ENCODE measurements at regions of chr12 and their contacts with region 1.

Region 1: GRCh38 chr12:95998611-95999286 is 2.6 kb upstream of the HAL start:
- DNase-seq: peak; percentile 55 to 71 (median 61)
- H3K4me3 ChIP-seq: no peak overlapping the region
- H3K4me3 Mint-ChIP-seq: no peak overlapping the region
- H3K27ac ChIP-seq: peak overlapping the region; percentile 10 to 90
- H3K27ac Mint-ChIP-seq: peak overlapping the region; percentile 60 to 94 (median 86)
- H3K4me1 ChIP-seq: peaks cover 49 to 57% of the 10 kb centered on the region in 2 donors
- H3K4me1 Mint-ChIP-seq: peaks cover 60% of the 10 kb centered on the region
- H3K27me3 ChIP-seq: no peaks in the 10 kb centered on the region
- H3K27me3 Mint-ChIP-seq: peaks cover 0 to 2% (median 0%) of the 10 kb centered on the region in 3 donors
- CTCF ChIP-seq: peak; percentile 85

Region 2: GRCh38 chr12:95858479-95859343 is 140.0 kb before region 1 on chr12 and contains the start of gene SNRPF:
- intact Hi-C with region 1: loop called in 1 of 2 experiments (anchors 5 kb)
- DNase-seq: peak; percentile 94 to 96 (median 96)
- H3K4me3 ChIP-seq: peak within 1 kb of the TSS; percentile 68 to 88 (median 73)
- H3K4me3 Mint-ChIP-seq: no peak within 1 kb of the TSS
- H3K27ac ChIP-seq: peak within 1 kb of the TSS; percentile 81 to 88
- H3K27ac Mint-ChIP-seq: peak within 1 kb of the TSS in 1 of 7 donors; percentile 11
- H3K4me1 ChIP-seq: peaks cover 23 to 28% of the 10 kb centered on the region in 2 donors
- H3K4me1 Mint-ChIP-seq: no peaks in the 10 kb centered on the region
- H3K27me3 ChIP-seq: peaks cover 23 to 38% of the 10 kb centered on the region in 2 donors
- H3K27me3 Mint-ChIP-seq: peaks cover 19 to 25% (median 23%) of the 10 kb centered on the region in 3 donors
- CTCF ChIP-seq: no peak
- polyA plus RNA-seq, gene SNRPF: 9.0 to 28.5 (median 23.5) TPM

Region 3: DNA sequence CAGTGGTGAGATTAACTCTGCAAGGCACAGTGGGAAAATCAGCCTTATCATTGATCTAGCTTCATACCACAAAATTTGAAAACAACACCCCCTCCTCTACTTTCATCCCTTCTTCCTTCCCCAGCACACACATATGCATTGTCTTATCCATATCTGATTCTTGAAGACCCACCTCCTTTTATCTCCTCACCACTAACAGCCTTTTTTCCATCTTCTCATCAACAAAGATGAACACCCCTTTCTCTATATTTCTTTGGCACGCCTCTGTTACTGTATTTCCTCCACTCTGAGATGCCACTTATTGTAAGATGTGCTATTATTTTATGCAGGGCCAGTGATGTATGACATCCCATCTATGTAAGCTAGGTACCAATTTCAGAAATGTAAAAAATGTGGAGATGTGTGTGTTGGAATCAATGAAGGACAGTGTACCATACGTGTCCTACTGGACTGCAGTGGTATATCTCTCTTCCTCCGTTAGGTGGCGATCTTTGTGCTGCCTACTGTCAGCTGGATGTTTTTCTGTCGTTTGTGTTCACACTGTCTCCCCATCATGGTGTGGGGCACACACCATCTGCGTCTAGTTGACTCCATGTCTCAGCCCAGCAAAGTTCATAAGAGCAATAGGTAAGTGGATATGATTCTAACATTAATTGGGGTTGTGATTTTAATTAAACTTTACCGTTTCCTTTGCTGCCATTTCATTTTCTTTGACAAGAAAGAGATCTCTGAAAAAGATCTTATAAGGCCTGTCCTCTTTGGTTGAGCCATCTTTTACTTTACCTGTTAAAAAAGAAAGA is 80.4 kb before region 1 on chr12:
- intact Hi-C with region 1: loop called in 1 of 2 experiments (anchors 5 kb)
- DNase-seq: peak; percentile 36 to 59 (median 55)
- H3K4me3 ChIP-seq: no peak overlapping the region
- H3K4me3 Mint-ChIP-seq: no peak overlapping the region
- H3K27ac ChIP-seq: no peak overlapping the region
- H3K27ac Mint-ChIP-seq: no peak overlapping the region
- H3K4me1 ChIP-seq: no peaks in the 10 kb centered on the region
- H3K4me1 Mint-ChIP-seq: peaks cover under 1% of the 10 kb centered on the region
- H3K27me3 ChIP-seq: peaks cover 2 to 4% of the 10 kb centered on the region in 2 donors
- H3K27me3 Mint-ChIP-seq: peaks cover 4 to 7% (median 5%) of the 10 kb centered on the region in 3 donors
- CTCF ChIP-seq: peak; percentile 93

Region 4: DNA sequence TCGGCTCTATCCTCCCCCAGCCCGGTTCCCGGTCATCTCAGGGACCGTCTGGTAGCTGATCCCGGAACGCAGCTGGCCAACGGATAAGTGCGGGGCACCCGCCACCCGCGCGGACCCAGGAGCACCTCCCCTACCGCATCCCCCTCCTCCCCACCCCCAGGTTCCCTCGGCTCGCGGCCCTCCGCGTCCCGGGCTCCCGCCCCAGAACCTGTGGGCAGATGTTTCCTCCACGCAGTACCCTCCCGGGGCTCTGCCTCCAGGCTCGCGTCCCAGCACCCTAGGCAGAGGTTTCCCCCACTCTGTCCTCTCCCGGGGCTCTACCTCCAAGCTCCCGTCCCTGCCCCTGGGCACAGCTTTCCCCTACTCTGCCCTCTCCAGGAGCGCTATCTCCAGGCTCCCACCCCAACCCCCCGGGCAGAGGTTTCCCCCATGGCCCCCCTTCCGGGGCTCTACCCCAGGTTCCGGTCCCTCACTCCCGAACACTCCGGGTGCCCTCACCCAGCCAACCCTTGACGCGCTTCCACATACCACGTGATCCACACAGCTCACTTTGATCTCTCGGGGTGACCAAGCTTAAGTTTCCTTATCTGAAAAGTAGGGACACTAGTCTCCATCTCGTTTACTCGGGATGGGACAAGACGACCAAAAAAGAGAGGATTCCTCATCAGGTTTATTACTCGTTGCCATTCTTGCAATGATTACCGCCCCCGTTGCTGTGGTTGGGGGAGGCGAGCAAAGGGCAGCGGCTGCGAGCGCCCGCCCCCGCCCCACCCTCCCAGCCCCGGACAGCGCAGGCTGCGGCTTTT is 56.0 kb before region 1 on chr12 and contains the start of gene CCDC38:
- intact Hi-C with region 1: loop called in 1 of 2 experiments (anchors 10 kb)
- DNase-seq: peak; percentile 57 to 72 (median 70)
- H3K4me3 ChIP-seq: peak within 1 kb of the TSS; percentile 58 to 97 (median 78)
- H3K4me3 Mint-ChIP-seq: peak within 1 kb of the TSS; percentile 88 to 96
- H3K27ac ChIP-seq: peak within 1 kb of the TSS; percentile 10 to 77
- H3K27ac Mint-ChIP-seq: peak within 1 kb of the TSS; percentile 50 to 90 (median 80)
- H3K4me1 ChIP-seq: peaks cover 12 to 15% of the 10 kb centered on the region in 2 donors
- H3K4me1 Mint-ChIP-seq: peaks cover 11% of the 10 kb centered on the region
- H3K27me3 ChIP-seq: no peaks in the 10 kb centered on the region
- H3K27me3 Mint-ChIP-seq: peaks cover 0 to 4% (median 2%) of the 10 kb centered on the region in 3 donors
- CTCF ChIP-seq: no peak
- polyA plus RNA-seq, gene CCDC38: not detected

Region 5: DNA sequence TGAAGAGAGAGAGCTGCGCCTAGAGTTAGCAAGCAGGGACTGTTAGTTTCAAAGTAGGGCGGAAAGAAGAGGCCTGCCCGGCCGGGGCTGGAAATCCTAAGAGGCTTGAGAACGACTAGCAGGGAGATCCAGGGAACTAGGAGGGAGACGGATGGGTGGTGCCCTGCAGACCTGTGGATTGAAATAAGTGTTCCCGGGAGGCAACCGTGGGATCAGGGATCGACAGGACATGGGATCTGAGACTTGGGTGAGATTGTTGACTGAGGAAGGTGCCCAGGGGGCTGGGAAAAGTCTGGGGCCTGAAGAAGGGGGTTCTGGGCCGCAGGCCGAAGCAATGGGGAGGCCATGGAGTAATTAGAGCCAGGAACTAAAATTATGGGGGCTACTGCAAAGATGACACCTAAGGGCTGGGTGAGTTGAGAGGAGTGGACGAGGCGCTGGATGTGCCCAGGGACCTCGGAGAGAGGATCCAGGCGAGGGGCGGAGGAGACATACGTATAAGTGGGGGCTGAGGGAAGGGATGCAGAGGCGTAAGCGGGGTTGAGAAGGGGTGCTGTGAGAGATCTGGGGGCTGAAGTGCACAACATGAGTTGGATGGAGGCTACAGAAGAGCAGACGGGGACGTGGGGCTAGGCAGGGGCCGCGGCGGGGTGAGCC is 36.0 kb after region 1 on chr12:
- intact Hi-C with region 1: no loop called
- DNase-seq: no peak
- H3K4me3 ChIP-seq: peak overlapping the region; percentile 77 to 99 (median 98)
- H3K4me3 Mint-ChIP-seq: no peak overlapping the region
- H3K27ac ChIP-seq: peak overlapping the region; percentile 73 to 87
- H3K27ac Mint-ChIP-seq: no peak overlapping the region
- H3K4me1 ChIP-seq: peaks cover 66 to 84% of the 10 kb centered on the region in 2 donors
- H3K4me1 Mint-ChIP-seq: peaks cover 35% of the 10 kb centered on the region
- H3K27me3 ChIP-seq: no peaks in the 10 kb centered on the region
- H3K27me3 Mint-ChIP-seq: no peaks in the 10 kb centered on the region
- CTCF ChIP-seq: no peak

Measured in CD14-positive monocyte (primary cell).